Heart right ventricle (tissue), 16 donors: ENCODE measurements at regions of chr18 and their contacts with region 1.

Region 1: GRCh38 chr18:43271593-43272432 is 5.5 kb downstream of the SYT4 start:
- DNase-seq: peak in 1 of 2 donors; percentile 19
- ATAC-seq: no peak
- H3K4me3 ChIP-seq: no peak overlapping the region
- H3K27ac ChIP-seq: no peak overlapping the region
- H3K4me1 ChIP-seq: no peaks in the 10 kb centered on the region
- H3K27me3 ChIP-seq: peaks cover 0 to 13% (median 5%) of the 10 kb centered on the region in 7 donors
- CTCF ChIP-seq: peak; percentile 63 to 88 (median 80)

Region 2: DNA sequence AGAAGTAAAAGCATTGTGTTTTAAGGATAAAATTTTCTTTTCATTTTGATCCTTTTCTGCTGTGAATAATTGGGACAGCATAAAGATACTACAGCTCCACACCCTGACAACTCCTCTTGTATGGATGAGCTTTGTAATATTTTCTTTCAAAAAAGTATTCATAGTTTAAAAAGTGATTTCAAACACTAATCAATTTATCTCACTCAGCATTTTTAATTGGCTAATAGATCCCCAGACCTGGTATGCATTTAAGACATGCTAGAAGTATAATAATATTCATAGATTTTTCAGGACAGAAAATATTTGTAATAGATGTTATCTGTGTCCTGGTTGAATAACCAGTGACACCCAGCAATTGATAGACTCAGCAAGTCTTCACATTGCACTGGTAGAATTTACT is 667.0 kb before region 1 on chr18:
- intact Hi-C with region 1: loop called in 1 of 10 experiments (anchors 5 kb)
- DNase-seq: no peak
- ATAC-seq: no peak
- H3K4me3 ChIP-seq: no peak overlapping the region
- H3K27ac ChIP-seq: no peak overlapping the region
- H3K4me1 ChIP-seq: no peaks in the 10 kb centered on the region
- H3K27me3 ChIP-seq: no peaks in the 10 kb centered on the region
- CTCF ChIP-seq: no peak

Region 3: GRCh38 chr18:43129946-43130524 is 141.8 kb before region 1 on chr18:
- intact Hi-C with region 1: no loop called
- DNase-seq: no peak
- ATAC-seq: peak in 1 of 8 donors; percentile 28
- H3K4me3 ChIP-seq: peak overlapping the region in 5 of 10 donors; percentile 15 to 52 (median 35)
- H3K27ac ChIP-seq: no peak overlapping the region
- H3K4me1 ChIP-seq: no peaks in the 10 kb centered on the region
- H3K27me3 ChIP-seq: peaks cover 0 to 4% (median 0%) of the 10 kb centered on the region in 7 donors
- CTCF ChIP-seq: no peak

Region 4: GRCh38 chr18:43220691-43221090 is 51.1 kb before region 1 on chr18:
- intact Hi-C with region 1: no loop called
- DNase-seq: no peak
- ATAC-seq: no peak
- H3K4me3 ChIP-seq: no peak overlapping the region
- H3K27ac ChIP-seq: no peak overlapping the region
- H3K4me1 ChIP-seq: no peaks in the 10 kb centered on the region
- H3K27me3 ChIP-seq: no peaks in the 10 kb centered on the region
- CTCF ChIP-seq: no peak

Region 5: DNA sequence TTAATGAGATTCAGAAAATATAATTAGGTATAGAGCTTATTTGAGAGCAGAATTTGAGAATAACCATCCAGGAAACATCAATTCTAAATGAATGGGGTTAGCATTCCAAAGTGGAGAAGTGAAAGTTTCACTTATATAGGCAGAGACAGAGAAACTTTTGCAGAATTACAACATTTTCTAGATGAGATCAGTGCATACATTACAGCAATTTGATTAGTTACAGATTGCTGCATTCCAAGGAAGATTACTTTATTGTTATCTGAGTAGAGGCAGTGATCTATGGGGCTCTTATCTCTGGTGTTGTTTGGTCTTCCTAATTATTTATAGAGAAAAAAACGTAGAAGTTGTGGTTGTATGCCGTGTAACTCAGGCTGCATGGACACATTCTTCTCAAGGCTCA is 379.2 kb after region 1 on chr18:
- intact Hi-C with region 1: no loop called
- DNase-seq: no peak
- ATAC-seq: no peak
- H3K4me3 ChIP-seq: no peak overlapping the region
- H3K27ac ChIP-seq: no peak overlapping the region
- H3K4me1 ChIP-seq: no peaks in the 10 kb centered on the region
- H3K27me3 ChIP-seq: no peaks in the 10 kb centered on the region
- CTCF ChIP-seq: no peak

Region 6: GRCh38 chr18:44098551-44099098 is 826.8 kb after region 1 on chr18:
- intact Hi-C with region 1: no loop called
- DNase-seq: no peak
- ATAC-seq: peak in 2 of 8 donors; percentile 33 to 54
- H3K4me3 ChIP-seq: no peak overlapping the region
- H3K27ac ChIP-seq: no peak overlapping the region
- H3K4me1 ChIP-seq: no peaks in the 10 kb centered on the region
- H3K27me3 ChIP-seq: no peaks in the 10 kb centered on the region
- CTCF ChIP-seq: peak in 4 of 9 donors; percentile 13 to 43 (median 32)